Heart right ventricle (tissue), 16 donors: ENCODE measurements at regions of chr7 and their contacts with region 1.

Region 1: GRCh38 chr7:12670000-12670729 is 17.3 kb upstream of the ARL4A start:
- DNase-seq: no peak
- ATAC-seq: peak in 1 of 8 donors; percentile 56
- H3K4me3 ChIP-seq: no peak overlapping the region
- H3K27ac ChIP-seq: no peak overlapping the region
- H3K4me1 ChIP-seq: peaks cover 0 to 15% (median 8%) of the 10 kb centered on the region in 9 donors
- H3K27me3 ChIP-seq: no peaks in the 10 kb centered on the region
- CTCF ChIP-seq: no peak

Region 2: GRCh38 chr7:12601302-12601869 is 68.8 kb before region 1 on chr7:
- intact Hi-C with region 1: loop called in 1 of 10 experiments (anchors 10 kb)
- DNase-seq: no peak
- ATAC-seq: no peak
- H3K4me3 ChIP-seq: no peak overlapping the region
- H3K27ac ChIP-seq: no peak overlapping the region
- H3K4me1 ChIP-seq: no peaks in the 10 kb centered on the region
- H3K27me3 ChIP-seq: no peaks in the 10 kb centered on the region
- CTCF ChIP-seq: no peak

Region 3: DNA sequence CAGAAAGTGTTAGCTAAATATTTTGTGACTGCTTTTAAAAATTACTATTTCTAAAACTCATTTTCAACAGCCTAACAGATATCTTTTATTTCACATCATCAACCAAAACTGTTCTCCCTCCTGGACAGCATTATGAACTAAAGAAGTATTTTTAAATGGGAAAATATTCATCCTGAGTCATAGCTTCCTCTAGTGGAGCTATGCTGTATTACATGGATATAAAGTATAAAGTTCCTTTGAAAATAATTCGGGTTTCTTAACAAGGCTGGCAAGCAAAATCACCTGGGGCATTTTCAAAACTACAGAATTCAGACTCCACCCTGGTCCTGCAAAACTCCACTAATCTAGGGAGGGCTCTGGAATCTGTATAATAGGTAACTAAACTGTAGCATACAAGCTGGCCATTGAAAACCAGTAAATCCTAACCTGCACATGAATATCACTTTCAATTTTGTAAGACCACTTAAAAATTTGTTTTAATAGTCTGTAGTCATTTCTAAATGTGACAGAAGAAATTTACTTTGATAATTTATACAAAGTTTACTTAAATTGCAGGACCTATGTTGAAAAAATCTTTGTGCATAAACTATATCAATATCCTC is 46.2 kb before region 1 on chr7:
- intact Hi-C with region 1: no loop called
- DNase-seq: no peak
- ATAC-seq: no peak
- H3K4me3 ChIP-seq: no peak overlapping the region
- H3K27ac ChIP-seq: no peak overlapping the region
- H3K4me1 ChIP-seq: peaks cover 0 to 9% (median 0%) of the 10 kb centered on the region in 9 donors
- H3K27me3 ChIP-seq: no peaks in the 10 kb centered on the region
- CTCF ChIP-seq: peak; percentile 35 to 74 (median 72)